ENCODE measurements at regions of chr19 and their contacts with region 1.

Region 1: GRCh38 chr19:11558881-11559828 is at the start of gene ELOF1:
- DNase-seq: peak; percentile 98
- ATAC-seq: peak; percentile 86
- H3K4me3 ChIP-seq: peak within 1 kb of the TSS; percentile 70 to 95 (median 75)
- H3K4me3 Mint-ChIP-seq: peak within 1 kb of the TSS; percentile 93
- H3K27ac ChIP-seq: peak within 1 kb of the TSS; percentile 80 to 81
- H3K27ac Mint-ChIP-seq: peak within 1 kb of the TSS; percentile 96
- H3K4me1 ChIP-seq: peaks cover 33 to 64% of the 10 kb centered on the region in 2 donors
- H3K4me1 Mint-ChIP-seq: peaks cover 61% of the 10 kb centered on the region
- H3K27me3 ChIP-seq: no peaks in the 10 kb centered on the region
- H3K27me3 Mint-ChIP-seq: no peaks in the 10 kb centered on the region
- CTCF ChIP-seq: no peak
- total RNA-seq, gene ELOF1: 69.5 and 70.9 TPM in 2 replicates

Region 2: GRCh38 chr19:11505032-11505503 is 54.1 kb before region 1 on chr19:
- CTCF ChIA-PET with region 1: no interaction called
- POLR2A ChIA-PET with region 1: no interaction called
- intact Hi-C with region 1: loop called (anchors 1 kb)
- DNase-seq: peak; percentile 97
- ATAC-seq: peak; percentile 90
- H3K4me3 ChIP-seq: peak overlapping the region in 4 of 5 experiments; percentile 62 to 98 (median 82)
- H3K4me3 Mint-ChIP-seq: peak overlapping the region; percentile 87
- H3K27ac ChIP-seq: peak overlapping the region; percentile 65 to 98
- H3K27ac Mint-ChIP-seq: peak overlapping the region; percentile 93
- H3K4me1 ChIP-seq: peaks cover 9 to 13% of the 10 kb centered on the region in 2 donors
- H3K4me1 Mint-ChIP-seq: peaks cover 13% of the 10 kb centered on the region
- H3K27me3 ChIP-seq: no peaks in the 10 kb centered on the region
- H3K27me3 Mint-ChIP-seq: no peaks in the 10 kb centered on the region
- CTCF ChIP-seq: no peak

Region 3: DNA sequence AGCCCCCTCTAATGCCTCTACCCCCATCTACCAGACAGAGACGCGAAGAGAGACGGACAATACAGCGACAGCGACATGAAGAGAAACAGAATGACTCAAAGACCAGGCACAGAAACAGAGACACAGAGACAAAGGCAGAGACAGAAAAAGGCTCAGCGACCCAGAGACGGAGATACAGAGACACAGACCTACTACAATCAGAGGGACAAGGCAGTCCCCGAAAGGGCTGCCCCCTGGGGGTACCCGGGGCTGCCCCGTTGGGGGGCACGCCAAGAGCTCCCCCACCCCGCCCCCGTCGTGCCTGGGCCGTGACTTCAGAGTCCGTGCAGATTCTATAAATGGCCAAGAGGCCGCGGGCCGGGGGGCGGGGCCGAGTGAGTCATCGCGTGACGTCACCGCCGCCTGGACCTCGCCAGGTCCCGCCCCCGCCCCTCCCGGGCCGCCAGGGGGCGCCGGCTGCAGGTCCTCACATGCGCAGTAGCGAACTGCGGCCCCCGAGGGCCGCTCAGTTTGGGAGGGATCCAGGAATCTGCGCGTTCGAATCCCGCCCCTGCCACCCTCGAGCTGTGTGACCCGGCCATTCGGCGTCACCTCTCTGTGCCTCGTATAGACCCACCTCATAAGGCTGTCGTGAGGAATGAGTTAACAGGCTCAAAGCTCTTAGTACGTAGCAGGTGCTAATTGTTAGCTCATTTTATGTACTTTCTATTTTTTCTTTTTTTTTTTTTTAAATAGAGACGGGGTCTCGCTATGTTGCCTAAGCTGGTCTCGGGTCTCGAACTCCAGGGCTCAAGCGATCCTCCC is 23.2 kb before region 1 on chr19:
- CTCF ChIA-PET with region 1: interaction called, 22 read pairs
- POLR2A ChIA-PET with region 1: interaction called, 3 read pairs
- intact Hi-C with region 1: loop called (anchors 1 kb)
- DNase-seq: peak; percentile 91
- ATAC-seq: peak; percentile 90
- H3K4me3 ChIP-seq: peak overlapping the region in 4 of 5 experiments; percentile 17 to 59 (median 39)
- H3K4me3 Mint-ChIP-seq: peak overlapping the region; percentile 74
- H3K27ac ChIP-seq: peak overlapping the region; percentile 66 to 70
- H3K27ac Mint-ChIP-seq: peak overlapping the region; percentile 71
- H3K4me1 ChIP-seq: peaks cover 24 to 33% of the 10 kb centered on the region in 2 donors
- H3K4me1 Mint-ChIP-seq: peaks cover 22% of the 10 kb centered on the region
- H3K27me3 ChIP-seq: peaks cover 0 to 30% (median 12%) of the 10 kb centered on the region in 4 experiments
- H3K27me3 Mint-ChIP-seq: peaks cover 13% of the 10 kb centered on the region
- CTCF ChIP-seq: peak; percentile 91

Region 4: DNA sequence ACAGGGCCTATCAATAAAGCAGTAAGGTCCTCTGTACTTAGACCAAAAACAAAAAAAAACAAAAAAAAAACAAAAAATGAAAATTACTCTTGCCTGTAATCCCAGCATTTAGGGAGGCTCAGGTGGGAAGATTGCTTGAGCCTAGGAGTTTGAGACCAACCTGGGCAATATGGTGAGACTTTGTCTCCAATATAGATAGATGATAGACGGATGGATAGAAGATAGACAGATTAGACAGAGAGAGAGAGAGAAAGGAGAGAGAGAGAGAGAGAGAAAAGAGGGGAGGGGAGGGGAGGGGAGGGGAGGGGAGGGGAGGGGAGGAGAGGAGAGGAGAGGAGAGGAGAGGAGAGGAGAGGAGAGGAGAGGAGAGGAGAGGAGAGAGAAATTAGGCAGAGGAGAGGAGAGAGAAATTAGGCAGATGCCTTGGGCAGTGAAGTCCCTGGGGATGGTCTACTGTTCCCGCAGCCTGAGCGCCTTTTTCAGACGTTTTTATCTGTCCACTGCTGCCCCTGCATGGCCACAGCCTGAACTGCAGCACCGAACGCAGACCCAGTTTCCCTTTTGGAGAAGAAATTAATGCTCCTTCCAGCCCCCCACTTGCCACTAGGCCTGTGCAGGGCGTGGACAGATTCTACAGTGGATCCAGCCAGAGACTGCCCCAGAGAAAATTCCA is 28.3 kb after region 1 on chr19:
- CTCF ChIA-PET with region 1: interaction called, 289 read pairs
- POLR2A ChIA-PET with region 1: interaction called, 15 read pairs
- intact Hi-C with region 1: loop called (anchors 1 kb)
- DNase-seq: peak; percentile 88
- ATAC-seq: peak; percentile 75
- H3K4me3 ChIP-seq: no peak overlapping the region
- H3K4me3 Mint-ChIP-seq: no peak overlapping the region
- H3K27ac ChIP-seq: no peak overlapping the region
- H3K27ac Mint-ChIP-seq: peak overlapping the region; percentile 32
- H3K4me1 ChIP-seq: peaks cover 34 to 51% of the 10 kb centered on the region in 2 donors
- H3K4me1 Mint-ChIP-seq: peaks cover 39% of the 10 kb centered on the region
- H3K27me3 ChIP-seq: no peaks in the 10 kb centered on the region
- H3K27me3 Mint-ChIP-seq: no peaks in the 10 kb centered on the region
- CTCF ChIP-seq: peak; percentile 82

Region 5: GRCh38 chr19:11738746-11739620 is 179.8 kb after region 1 on chr19 and contains the start of gene ZNF823:
- CTCF ChIA-PET with region 1: no interaction called
- POLR2A ChIA-PET with region 1: no interaction called
- intact Hi-C with region 1: loop called (anchors 2 kb)
- DNase-seq: peak; percentile 94
- ATAC-seq: peak; percentile 99
- H3K4me3 ChIP-seq: peak within 1 kb of the TSS; percentile 36 to 92 (median 83)
- H3K4me3 Mint-ChIP-seq: peak within 1 kb of the TSS; percentile 99
- H3K27ac ChIP-seq: peak within 1 kb of the TSS in 1 of 2 donors; percentile 38
- H3K27ac Mint-ChIP-seq: peak within 1 kb of the TSS; percentile 89
- H3K4me1 ChIP-seq: peaks cover 15 to 19% of the 10 kb centered on the region in 2 donors
- H3K4me1 Mint-ChIP-seq: peaks cover 26% of the 10 kb centered on the region
- H3K27me3 ChIP-seq: no peaks in the 10 kb centered on the region
- H3K27me3 Mint-ChIP-seq: peaks cover 5% of the 10 kb centered on the region
- CTCF ChIP-seq: no peak
- total RNA-seq, gene ZNF823: 4.2 and 5.1 TPM in 2 replicates